AG04450 (cell line): ENCODE measurements at regions of chr13 and their contacts with region 1.

Region 1: GRCh38 chr13:26929971-26930730 is 169.6 kb upstream of the GPR12 start:
- DNase-seq: peak; percentile 18
- H3K4me3 ChIP-seq: 0 out of 2 replicates have a peak overlapping the region, but pooled peaks have one; percentile 13
- H3K27ac ChIP-seq: no peak overlapping the region
- H3K27me3 ChIP-seq: peaks cover 14% of the 10 kb centered on the region
- CTCF ChIP-seq: peak; percentile 96

Region 2: GRCh38 chr13:26656919-26657318 is 273.2 kb before region 1 on chr13:
- CTCF ChIA-PET with region 1: interaction called, 10 read pairs
- POLR2A ChIA-PET with region 1: no interaction called
- DNase-seq: peak; percentile 68
- H3K4me3 ChIP-seq: no peak overlapping the region
- H3K27ac ChIP-seq: no peak overlapping the region
- H3K27me3 ChIP-seq: no peaks in the 10 kb centered on the region
- CTCF ChIP-seq: peak; percentile 66

Region 3: GRCh38 chr13:26707122-26708006 is 222.8 kb before region 1 on chr13:
- CTCF ChIA-PET with region 1: interaction called, 33 read pairs
- POLR2A ChIA-PET with region 1: no interaction called
- DNase-seq: peak; percentile 7
- H3K4me3 ChIP-seq: no peak overlapping the region
- H3K27ac ChIP-seq: no peak overlapping the region
- H3K27me3 ChIP-seq: peaks cover 6% of the 10 kb centered on the region
- CTCF ChIP-seq: peak; percentile 65

Region 4: GRCh38 chr13:26914624-26915023 is 15.5 kb before region 1 on chr13:
- CTCF ChIA-PET with region 1: interaction called, 30 read pairs
- POLR2A ChIA-PET with region 1: no interaction called
- DNase-seq: no peak
- H3K4me3 ChIP-seq: no peak overlapping the region
- H3K27ac ChIP-seq: no peak overlapping the region
- H3K27me3 ChIP-seq: peaks cover 18% of the 10 kb centered on the region
- CTCF ChIP-seq: no peak